ENCODE measurements at regions of chr1 and their contacts with region 1.

Region 1: GRCh38 chr1:248622570-248623001 is 12.3 kb downstream of the OR2T11 start:
- DNase-seq: peak; percentile 71
- H3K4me3 Mint-ChIP-seq: no peak overlapping the region
- H3K27ac Mint-ChIP-seq: no peak overlapping the region
- H3K4me1 Mint-ChIP-seq: peaks cover 9% of the 10 kb centered on the region
- H3K27me3 Mint-ChIP-seq: no peaks in the 10 kb centered on the region
- CTCF ChIP-seq: peak; percentile 74

Region 2: DNA sequence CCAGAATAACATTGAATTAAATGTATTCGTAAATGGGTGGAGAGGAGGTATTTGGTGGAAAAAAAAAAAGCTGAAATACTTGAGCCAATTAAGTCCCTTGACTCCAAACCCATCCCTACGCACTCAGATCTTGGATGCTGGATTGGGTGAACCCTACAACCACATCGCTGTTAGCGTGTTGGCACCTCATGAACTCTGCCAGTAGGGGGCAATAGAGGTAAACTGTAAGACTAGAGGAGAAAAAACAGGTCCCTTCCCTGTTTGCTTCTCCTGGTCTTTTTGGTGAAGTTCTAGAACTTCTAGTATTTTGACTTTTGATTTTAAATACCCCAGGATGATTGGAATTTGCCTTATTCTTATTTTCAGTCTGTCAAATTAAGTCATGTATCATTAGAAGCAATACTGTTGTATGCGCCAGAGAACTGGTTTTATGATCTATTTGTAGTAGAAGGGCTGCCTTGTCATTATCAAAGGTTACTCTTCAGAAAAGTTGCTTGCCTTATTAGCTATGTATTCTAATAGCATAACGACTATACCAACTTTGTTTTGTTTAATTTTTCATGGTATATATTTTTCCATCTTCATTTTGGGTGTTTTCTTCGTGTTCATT is 941.2 kb before region 1 on chr1:
- CTCF ChIA-PET with region 1: interaction called, 3 read pairs
- POLR2A ChIA-PET with region 1: no interaction called
- intact Hi-C with region 1: loop called (anchors 5 kb)
- DNase-seq: peak; percentile 82
- H3K4me3 Mint-ChIP-seq: no peak overlapping the region
- H3K27ac Mint-ChIP-seq: no peak overlapping the region
- H3K4me1 Mint-ChIP-seq: peaks cover 6% of the 10 kb centered on the region
- H3K27me3 Mint-ChIP-seq: no peaks in the 10 kb centered on the region
- CTCF ChIP-seq: peak; percentile 99

Region 3: GRCh38 chr1:248576260-248576980 is 46.2 kb before region 1 on chr1:
- CTCF ChIA-PET with region 1: no interaction called
- POLR2A ChIA-PET with region 1: no interaction called
- intact Hi-C with region 1: no loop called
- DNase-seq: no peak
- H3K4me3 Mint-ChIP-seq: no peak overlapping the region
- H3K27ac Mint-ChIP-seq: no peak overlapping the region
- H3K4me1 Mint-ChIP-seq: peaks cover 12% of the 10 kb centered on the region
- H3K27me3 Mint-ChIP-seq: peaks cover 26% of the 10 kb centered on the region
- CTCF ChIP-seq: no peak

Region 4: GRCh38 chr1:248611883-248612414 is 10.6 kb before region 1 on chr1:
- CTCF ChIA-PET with region 1: interaction called, 30 read pairs
- POLR2A ChIA-PET with region 1: no interaction called
- intact Hi-C with region 1: no loop called
- DNase-seq: peak; percentile 52
- H3K4me3 Mint-ChIP-seq: no peak overlapping the region
- H3K27ac Mint-ChIP-seq: no peak overlapping the region
- H3K4me1 Mint-ChIP-seq: peaks cover 8% of the 10 kb centered on the region
- H3K27me3 Mint-ChIP-seq: no peaks in the 10 kb centered on the region
- CTCF ChIP-seq: no peak

Region 5: DNA sequence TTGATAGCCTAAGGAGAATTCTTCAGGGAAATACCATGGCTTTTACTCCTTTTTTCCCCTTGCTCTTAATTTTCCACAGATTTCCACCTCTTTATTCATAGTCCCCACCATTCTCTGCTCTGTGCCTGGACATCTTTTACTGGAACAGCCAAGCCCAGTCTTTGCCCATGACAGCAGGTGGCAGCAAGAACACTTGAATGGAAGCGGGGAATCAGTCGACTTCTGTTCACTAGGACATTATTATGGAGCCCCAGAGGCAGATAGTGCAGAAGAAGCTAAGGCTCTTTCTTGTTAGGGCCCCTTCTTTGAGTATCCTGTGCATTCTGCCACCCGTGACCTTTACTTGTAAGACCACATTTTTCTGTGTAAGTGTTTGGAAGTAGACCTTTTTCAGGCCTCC is 73.7 kb after region 1 on chr1:
- CTCF ChIA-PET with region 1: interaction called, 15 read pairs
- POLR2A ChIA-PET with region 1: interaction called, 3 read pairs
- intact Hi-C with region 1: no loop called
- DNase-seq: peak; percentile 33
- H3K4me3 Mint-ChIP-seq: no peak overlapping the region
- H3K27ac Mint-ChIP-seq: peak overlapping the region; percentile 68
- H3K4me1 Mint-ChIP-seq: peaks cover 29% of the 10 kb centered on the region
- H3K27me3 Mint-ChIP-seq: no peaks in the 10 kb centered on the region
- CTCF ChIP-seq: peak; percentile 39

Region 6: DNA sequence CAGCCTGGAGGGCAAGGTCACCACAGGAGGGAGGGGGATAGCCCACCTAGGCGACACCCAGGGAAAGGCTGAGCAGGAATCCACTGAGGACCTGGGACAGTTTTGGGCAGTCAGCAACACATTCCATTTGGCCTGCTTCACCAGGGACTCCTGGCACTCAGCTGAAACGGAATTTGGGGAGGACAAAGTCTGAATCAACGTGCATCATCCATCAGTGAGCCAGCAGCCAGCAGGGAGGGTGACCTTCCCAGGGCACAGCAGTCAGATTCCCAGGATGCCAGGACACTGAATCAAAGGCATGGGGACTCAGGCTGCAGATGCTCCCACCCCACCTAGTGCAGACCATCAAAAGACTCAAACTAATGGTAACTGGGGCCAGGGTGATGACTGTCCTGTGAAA is 198.5 kb after region 1 on chr1:
- CTCF ChIA-PET with region 1: interaction called, 19 read pairs
- POLR2A ChIA-PET with region 1: interaction called, 6 read pairs
- intact Hi-C with region 1: loop called (anchors 1 kb)
- DNase-seq: peak; percentile 41
- H3K4me3 Mint-ChIP-seq: no peak overlapping the region
- H3K27ac Mint-ChIP-seq: peak overlapping the region; percentile 16
- H3K4me1 Mint-ChIP-seq: peaks cover 53% of the 10 kb centered on the region
- H3K27me3 Mint-ChIP-seq: no peaks in the 10 kb centered on the region
- CTCF ChIP-seq: no peak